CD8-positive, alpha-beta T cell (primary cell): ENCODE measurements at regions of chr1 and their contacts with region 1.

Region 1: DNA sequence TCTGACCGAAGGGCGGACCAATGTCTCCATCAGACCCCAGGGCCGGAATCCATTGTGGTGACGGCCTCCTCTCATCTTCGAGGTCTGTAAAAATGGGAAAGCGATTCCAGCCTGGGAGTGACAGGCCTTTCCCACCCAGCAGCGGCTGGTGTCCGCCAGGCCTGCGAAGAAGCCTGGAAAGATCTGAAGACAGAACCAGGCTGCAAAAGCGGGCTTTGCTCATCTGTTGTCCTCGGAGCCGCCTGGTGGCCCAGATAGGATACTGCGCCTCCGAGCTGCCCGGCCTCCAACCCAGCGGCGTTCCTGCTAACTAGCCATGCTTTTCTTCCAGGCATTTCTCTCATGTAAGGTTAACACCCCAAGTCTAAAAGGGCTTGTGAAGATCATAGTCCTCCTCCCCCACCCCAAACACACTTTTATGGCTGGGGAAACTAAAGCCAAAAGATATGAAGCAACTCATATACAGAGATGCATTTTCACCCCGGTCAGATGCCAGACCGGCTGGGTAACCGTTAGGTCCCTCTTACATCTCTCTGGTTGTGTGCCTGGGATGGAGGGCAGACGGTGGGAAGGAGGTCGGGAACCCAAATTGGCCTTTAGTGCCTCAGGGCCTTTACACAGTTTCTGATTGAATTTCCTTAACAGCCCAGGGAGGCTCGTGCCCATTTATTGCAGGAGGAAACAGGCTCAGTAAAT is 1.9 kb upstream of the DHRS3 start:
- DNase-seq: peak; percentile 60 to 86 (median 79)
- ATAC-seq: peak; percentile 45
- H3K4me3 ChIP-seq: peak overlapping the region; percentile 90
- H3K4me3 Mint-ChIP-seq: peak overlapping the region; percentile 99
- H3K27ac ChIP-seq: no peak overlapping the region
- H3K27ac Mint-ChIP-seq: peak overlapping the region; percentile 69
- H3K4me1 ChIP-seq: peaks cover 33% of the 10 kb centered on the region
- H3K4me1 Mint-ChIP-seq: peaks cover 37% of the 10 kb centered on the region
- H3K27me3 ChIP-seq: no peaks in the 10 kb centered on the region
- H3K27me3 Mint-ChIP-seq: no peaks in the 10 kb centered on the region
- CTCF ChIP-seq: peak; percentile 97

Region 2: GRCh38 chr1:12229835-12230548 is 389.9 kb before region 1 on chr1 and contains the start of gene VPS13D:
- CTCF ChIA-PET with region 1: no interaction called
- POLR2A ChIA-PET with region 1: no interaction called
- intact Hi-C with region 1: loop called in 1 of 2 experiments (anchors 2 kb)
- DNase-seq: peak; percentile 68 to 91 (median 84)
- ATAC-seq: peak; percentile 95
- H3K4me3 ChIP-seq: peak within 1 kb of the TSS; percentile 95 to 97
- H3K4me3 Mint-ChIP-seq: peak within 1 kb of the TSS; percentile 93
- H3K27ac ChIP-seq: peak within 1 kb of the TSS; percentile 50 to 70
- H3K27ac Mint-ChIP-seq: peak within 1 kb of the TSS; percentile 86
- H3K4me1 ChIP-seq: peaks cover 15% of the 10 kb centered on the region
- H3K4me1 Mint-ChIP-seq: peaks cover 30% of the 10 kb centered on the region
- H3K27me3 ChIP-seq: no peaks in the 10 kb centered on the region
- H3K27me3 Mint-ChIP-seq: no peaks in the 10 kb centered on the region
- CTCF ChIP-seq: peak; percentile 98
- total RNA-seq, gene VPS13D: 55.8 to 58.7 TPM

Region 3: DNA sequence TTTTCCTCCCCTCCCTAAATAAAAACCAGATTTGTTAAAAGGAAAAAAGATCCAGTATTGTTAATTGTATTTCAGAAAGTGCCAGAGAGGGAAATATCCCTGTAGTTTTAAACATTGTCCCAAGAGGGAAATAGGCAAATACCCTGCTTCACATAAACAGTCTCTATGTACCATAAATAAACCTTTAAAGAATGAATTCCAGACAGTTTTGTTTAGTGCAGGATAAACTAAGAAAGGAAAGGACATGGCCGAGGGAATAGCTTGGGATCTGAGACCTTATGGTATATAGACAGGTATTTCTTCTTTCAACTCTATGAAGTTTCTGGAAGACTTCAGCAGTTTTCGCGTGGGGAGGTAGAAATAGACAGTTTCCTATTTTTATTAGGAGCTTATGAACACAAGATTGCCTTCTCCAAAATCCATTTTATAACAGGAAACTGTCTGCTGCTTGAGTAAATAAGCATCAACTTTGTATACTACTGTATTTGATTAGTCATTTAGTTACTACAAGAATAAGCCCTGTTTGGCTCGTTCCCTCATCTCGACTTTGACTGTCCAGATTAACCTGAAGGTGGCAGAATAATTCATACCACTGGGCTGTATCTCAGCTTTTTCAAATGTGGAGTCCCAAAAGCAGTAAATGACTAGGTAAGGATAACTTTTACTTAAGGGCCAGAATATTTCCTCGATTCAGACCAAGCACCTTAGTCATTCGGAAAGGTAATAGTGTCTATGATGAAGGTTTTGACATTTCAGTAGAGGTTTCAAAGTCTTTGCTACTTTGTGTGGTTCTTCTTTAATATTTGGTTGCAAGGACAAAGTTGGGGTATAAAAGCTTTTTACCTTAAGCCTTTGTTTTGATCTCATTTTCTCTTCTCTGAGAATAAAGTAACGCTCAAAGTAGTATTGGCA is 212.6 kb before region 1 on chr1:
- CTCF ChIA-PET with region 1: interaction called, 62 read pairs
- POLR2A ChIA-PET with region 1: interaction called, 6 read pairs
- intact Hi-C with region 1: loop called (anchors 1 kb)
- DNase-seq: peak in 3 of 9 experiments; percentile 19 to 65 (median 50)
- ATAC-seq: peak; percentile 55
- H3K4me3 ChIP-seq: no peak overlapping the region
- H3K4me3 Mint-ChIP-seq: no peak overlapping the region
- H3K27ac ChIP-seq: no peak overlapping the region
- H3K27ac Mint-ChIP-seq: no peak overlapping the region
- H3K4me1 ChIP-seq: peaks cover 8% of the 10 kb centered on the region
- H3K4me1 Mint-ChIP-seq: peaks cover 20% of the 10 kb centered on the region
- H3K27me3 ChIP-seq: no peaks in the 10 kb centered on the region
- H3K27me3 Mint-ChIP-seq: no peaks in the 10 kb centered on the region
- CTCF ChIP-seq: peak; percentile 41

Region 4: GRCh38 chr1:12511516-12512468 is 108.1 kb before region 1 on chr1:
- CTCF ChIA-PET with region 1: interaction called, 3 read pairs
- POLR2A ChIA-PET with region 1: interaction called, 8 read pairs
- intact Hi-C with region 1: loop called (anchors 1 to 2 kb)
- DNase-seq: no peak
- ATAC-seq: no peak
- H3K4me3 ChIP-seq: peak overlapping the region in 1 of 2 experiments; percentile 20
- H3K4me3 Mint-ChIP-seq: peak overlapping the region; percentile 75
- H3K27ac ChIP-seq: peak overlapping the region; percentile 64 to 77
- H3K27ac Mint-ChIP-seq: peak overlapping the region; percentile 98
- H3K4me1 ChIP-seq: peaks cover 34% of the 10 kb centered on the region
- H3K4me1 Mint-ChIP-seq: peaks cover 52% of the 10 kb centered on the region
- H3K27me3 ChIP-seq: no peaks in the 10 kb centered on the region
- H3K27me3 Mint-ChIP-seq: no peaks in the 10 kb centered on the region
- CTCF ChIP-seq: no peak

Region 5: DNA sequence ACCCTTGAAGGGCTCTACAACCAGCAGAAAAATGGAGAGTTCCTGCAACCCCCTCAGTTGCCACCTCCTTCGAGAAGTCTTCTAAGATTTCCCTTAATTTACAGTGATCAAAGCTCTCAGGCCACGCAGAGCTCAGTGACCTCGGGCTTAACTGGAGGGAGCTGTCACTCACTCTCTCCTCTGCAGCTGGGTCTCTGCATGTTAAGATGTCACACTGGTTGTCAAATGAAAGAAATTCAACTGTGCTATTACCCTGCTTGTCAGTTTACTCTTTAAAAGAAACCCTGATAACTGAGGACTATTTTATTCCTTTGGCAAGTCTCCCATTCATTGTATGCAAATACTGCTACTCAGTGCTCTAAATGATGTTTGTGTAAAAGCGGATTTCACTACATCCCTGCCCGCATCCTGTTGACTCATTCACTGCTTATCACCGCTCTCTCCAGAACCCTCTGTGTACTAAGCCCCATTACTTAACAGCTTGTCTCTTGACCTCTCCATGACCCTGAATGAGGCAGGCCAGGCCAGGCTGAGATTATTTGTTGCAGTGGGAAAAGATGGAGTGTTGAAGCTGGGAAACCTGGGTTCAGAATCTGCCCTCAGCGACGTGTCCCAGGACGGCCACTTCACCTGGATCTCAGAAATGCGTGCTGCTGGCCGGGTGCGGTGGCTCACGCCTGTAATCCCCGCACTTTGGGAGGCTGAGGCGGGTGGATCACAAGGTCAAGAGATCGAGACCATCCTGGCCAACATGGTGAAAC is 15.6 kb before region 1 on chr1:
- CTCF ChIA-PET with region 1: interaction called, 174 read pairs
- POLR2A ChIA-PET with region 1: interaction called, 73 read pairs
- intact Hi-C with region 1: loop called (anchors 1 kb)
- DNase-seq: peak in 8 of 9 experiments; percentile 47 to 87 (median 72)
- ATAC-seq: peak; percentile 91
- H3K4me3 ChIP-seq: no peak overlapping the region
- H3K4me3 Mint-ChIP-seq: peak overlapping the region; percentile 50
- H3K27ac ChIP-seq: peak overlapping the region; percentile 22 to 59
- H3K27ac Mint-ChIP-seq: peak overlapping the region; percentile 95
- H3K4me1 ChIP-seq: peaks cover 36% of the 10 kb centered on the region
- H3K4me1 Mint-ChIP-seq: peaks cover 63% of the 10 kb centered on the region
- H3K27me3 ChIP-seq: no peaks in the 10 kb centered on the region
- H3K27me3 Mint-ChIP-seq: no peaks in the 10 kb centered on the region
- CTCF ChIP-seq: no peak

Region 6: GRCh38 chr1:13730751-13731482 is 1111.0 kb after region 1 on chr1:
- CTCF ChIA-PET with region 1: no interaction called
- POLR2A ChIA-PET with region 1: no interaction called
- intact Hi-C with region 1: loop called in 1 of 2 experiments (anchors 10 kb)
- DNase-seq: peak; percentile 69 to 96 (median 80)
- ATAC-seq: peak; percentile 93
- H3K4me3 ChIP-seq: peak overlapping the region; percentile 27 to 33
- H3K4me3 Mint-ChIP-seq: peak overlapping the region; percentile 74
- H3K27ac ChIP-seq: peak overlapping the region; percentile 84 to 87
- H3K27ac Mint-ChIP-seq: peak overlapping the region; percentile 98
- H3K4me1 ChIP-seq: peaks cover 68% of the 10 kb centered on the region
- H3K4me1 Mint-ChIP-seq: peaks cover 87% of the 10 kb centered on the region
- H3K27me3 ChIP-seq: no peaks in the 10 kb centered on the region
- H3K27me3 Mint-ChIP-seq: no peaks in the 10 kb centered on the region
- CTCF ChIP-seq: no peak